ENCODE measurements at regions of chr6 and their contacts with region 1.

Region 1: DNA sequence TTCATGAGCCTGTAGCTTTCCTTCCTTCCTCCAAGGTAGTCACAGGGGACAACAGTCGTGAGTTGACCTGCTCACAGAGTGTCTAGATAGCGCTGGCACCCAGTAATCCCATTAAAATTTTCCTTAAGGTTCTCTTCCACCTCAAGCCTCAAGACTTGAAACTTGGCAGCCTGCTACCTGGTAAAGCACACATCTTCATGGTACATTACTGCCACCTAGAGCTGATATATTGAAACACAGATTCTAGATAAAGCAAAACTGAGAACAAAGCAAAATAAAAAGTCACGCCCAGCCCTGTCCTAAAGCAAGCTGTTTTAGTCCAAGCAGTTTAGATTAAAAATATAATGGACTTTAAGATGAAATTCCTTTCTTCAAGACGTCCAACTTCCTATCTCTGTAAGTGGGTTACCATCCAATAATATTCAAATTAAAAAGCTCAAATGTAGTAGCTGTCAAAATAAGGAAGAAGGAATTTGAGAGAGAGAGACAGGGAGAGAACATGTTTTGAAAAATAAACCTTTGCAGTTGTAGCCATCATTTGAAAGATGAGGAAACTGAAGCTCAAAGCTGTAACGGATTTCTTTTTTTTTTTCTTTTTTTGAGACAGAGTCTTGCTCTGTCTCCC is 50.7 kb upstream of the CD83 start:
- DNase-seq: no peak
- ATAC-seq: peak; percentile 92
- H3K4me3 Mint-ChIP-seq: no peak overlapping the region
- H3K27ac Mint-ChIP-seq: no peak overlapping the region
- H3K4me1 Mint-ChIP-seq: peaks cover 11% of the 10 kb centered on the region
- H3K27me3 Mint-ChIP-seq: peaks cover 8% of the 10 kb centered on the region
- CTCF ChIP-seq: peak; percentile 73

Region 2: GRCh38 chr6:13795041-13795750 is 271.7 kb before region 1 on chr6:
- CTCF ChIA-PET with region 1: interaction called, 21 read pairs
- POLR2A ChIA-PET with region 1: no interaction called
- intact Hi-C with region 1: loop called (anchors 2 kb)
- DNase-seq: peak; percentile 95
- ATAC-seq: peak; percentile 97
- H3K4me3 Mint-ChIP-seq: no peak overlapping the region
- H3K27ac Mint-ChIP-seq: peak overlapping the region; percentile 38
- H3K4me1 Mint-ChIP-seq: peaks cover 17% of the 10 kb centered on the region
- H3K27me3 Mint-ChIP-seq: no peaks in the 10 kb centered on the region
- CTCF ChIP-seq: peak; percentile 89

Region 3: DNA sequence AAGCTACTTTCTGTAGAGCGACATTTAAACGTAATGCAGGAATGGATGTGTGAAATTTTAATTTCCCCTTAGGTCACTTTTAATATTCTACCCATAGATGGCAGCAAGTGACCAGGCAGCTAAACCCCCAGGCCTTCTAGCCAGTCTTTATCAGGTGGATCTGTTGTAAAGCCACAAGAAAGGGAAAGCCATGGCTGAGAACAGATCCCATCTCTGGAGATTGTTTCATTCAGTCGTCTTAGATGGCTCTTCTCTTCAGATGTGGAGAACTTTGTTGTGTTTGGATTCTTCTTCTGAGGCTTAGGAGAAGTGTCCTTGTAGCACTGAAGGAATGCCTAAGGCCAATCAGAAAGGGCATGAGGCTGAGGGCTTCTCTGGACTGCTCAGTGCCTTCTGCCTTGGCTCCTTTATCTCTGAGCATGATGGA is 157.9 kb before region 1 on chr6:
- CTCF ChIA-PET with region 1: interaction called, 88 read pairs
- POLR2A ChIA-PET with region 1: no interaction called
- intact Hi-C with region 1: no loop called
- DNase-seq: peak; percentile 49
- ATAC-seq: peak; percentile 79
- H3K4me3 Mint-ChIP-seq: no peak overlapping the region
- H3K27ac Mint-ChIP-seq: no peak overlapping the region
- H3K4me1 Mint-ChIP-seq: no peaks in the 10 kb centered on the region
- H3K27me3 Mint-ChIP-seq: peaks cover 29% of the 10 kb centered on the region
- CTCF ChIP-seq: peak; percentile 71

Region 4: DNA sequence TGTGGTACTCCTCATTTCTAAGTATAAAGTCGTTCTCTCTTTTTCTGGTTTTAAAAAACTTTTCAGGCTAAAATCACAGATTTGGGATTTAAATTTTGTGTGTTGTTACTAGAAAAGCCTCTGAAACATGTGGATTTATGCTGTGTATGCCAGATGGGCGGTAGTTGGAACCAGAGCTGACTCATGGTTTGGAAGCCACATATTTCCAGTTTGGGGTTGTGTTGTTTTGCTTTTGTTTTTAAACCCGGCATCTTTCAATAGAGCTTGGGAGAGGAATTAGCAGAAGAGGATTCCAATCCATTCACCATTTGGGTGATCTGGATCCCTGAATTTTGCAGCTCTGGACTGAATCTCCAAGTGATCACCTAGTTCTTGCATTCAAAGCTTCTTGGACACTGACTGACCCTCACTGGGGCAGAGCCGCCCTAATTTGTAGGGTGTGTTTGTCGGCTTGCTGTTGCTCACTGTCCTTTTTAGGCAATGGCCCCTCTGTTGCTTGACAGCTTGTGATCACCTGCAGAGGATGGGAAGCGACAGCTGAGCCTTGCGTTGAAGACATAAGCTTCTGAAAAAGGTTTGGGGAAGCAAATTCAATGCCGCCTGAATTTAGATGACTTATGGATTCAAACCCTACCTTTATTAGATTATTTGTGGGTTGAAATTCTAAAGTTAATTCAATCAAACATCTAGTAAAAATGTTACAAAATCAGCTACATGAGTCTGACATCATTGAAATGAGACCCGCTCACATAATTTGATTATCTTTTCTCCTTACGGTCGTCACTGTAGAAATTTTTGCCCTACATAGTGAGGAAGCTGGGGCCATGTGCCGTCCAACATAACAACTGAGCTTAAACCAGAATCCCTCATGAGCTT is 29.3 kb before region 1 on chr6:
- CTCF ChIA-PET with region 1: interaction called, 12 read pairs
- POLR2A ChIA-PET with region 1: no interaction called
- intact Hi-C with region 1: no loop called
- DNase-seq: no peak
- ATAC-seq: no peak
- H3K4me3 Mint-ChIP-seq: no peak overlapping the region
- H3K27ac Mint-ChIP-seq: no peak overlapping the region
- H3K4me1 Mint-ChIP-seq: peaks cover 1% of the 10 kb centered on the region
- H3K27me3 Mint-ChIP-seq: peaks cover 9% of the 10 kb centered on the region
- CTCF ChIP-seq: no peak

Region 5: GRCh38 chr6:14108571-14109410 is 41.9 kb after region 1 on chr6:
- CTCF ChIA-PET with region 1: interaction called, 19 read pairs
- POLR2A ChIA-PET with region 1: interaction called, 3 read pairs
- intact Hi-C with region 1: no loop called
- DNase-seq: peak; percentile 61
- ATAC-seq: peak; percentile 63
- H3K4me3 Mint-ChIP-seq: peak overlapping the region; percentile 32
- H3K27ac Mint-ChIP-seq: peak overlapping the region; percentile 87
- H3K4me1 Mint-ChIP-seq: peaks cover 30% of the 10 kb centered on the region
- H3K27me3 Mint-ChIP-seq: peaks cover 4% of the 10 kb centered on the region
- CTCF ChIP-seq: no peak

Region 6: GRCh38 chr6:14144678-14145113 is 77.8 kb after region 1 on chr6:
- CTCF ChIA-PET with region 1: interaction called, 56 read pairs
- POLR2A ChIA-PET with region 1: no interaction called
- intact Hi-C with region 1: no loop called
- DNase-seq: peak; percentile 74
- ATAC-seq: peak; percentile 99
- H3K4me3 Mint-ChIP-seq: no peak overlapping the region
- H3K27ac Mint-ChIP-seq: no peak overlapping the region
- H3K4me1 Mint-ChIP-seq: peaks cover 4% of the 10 kb centered on the region
- H3K27me3 Mint-ChIP-seq: no peaks in the 10 kb centered on the region
- CTCF ChIP-seq: peak; percentile 94